Activated CD8-positive, alpha-beta T cell treated with anti-CD3 and anti-CD28 coated beads for 36 hours (primary cell): ENCODE measurements at regions of chr4 and their contacts with region 1.

Region 1: GRCh38 chr4:1266881-1267763 is 18.2 kb upstream of the CTBP1 start:
- DNase-seq: no peak
- ATAC-seq: peak; percentile 82
- H3K4me3 Mint-ChIP-seq: peak overlapping the region; percentile 64
- H3K27ac Mint-ChIP-seq: peak overlapping the region; percentile 93
- H3K4me1 Mint-ChIP-seq: peaks cover 20% of the 10 kb centered on the region
- H3K27me3 Mint-ChIP-seq: no peaks in the 10 kb centered on the region
- CTCF ChIP-seq: no peak

Region 2: GRCh38 chr4:880684-881405 is 386.3 kb before region 1 on chr4:
- CTCF ChIA-PET with region 1: no interaction called
- POLR2A ChIA-PET with region 1: no interaction called
- intact Hi-C with region 1: no loop called
- DNase-seq: no peak
- ATAC-seq: no peak
- H3K4me3 Mint-ChIP-seq: no peak overlapping the region
- H3K27ac Mint-ChIP-seq: peak overlapping the region; percentile 99
- H3K4me1 Mint-ChIP-seq: peaks cover 26% of the 10 kb centered on the region
- H3K27me3 Mint-ChIP-seq: no peaks in the 10 kb centered on the region
- CTCF ChIP-seq: no peak

Region 3: DNA sequence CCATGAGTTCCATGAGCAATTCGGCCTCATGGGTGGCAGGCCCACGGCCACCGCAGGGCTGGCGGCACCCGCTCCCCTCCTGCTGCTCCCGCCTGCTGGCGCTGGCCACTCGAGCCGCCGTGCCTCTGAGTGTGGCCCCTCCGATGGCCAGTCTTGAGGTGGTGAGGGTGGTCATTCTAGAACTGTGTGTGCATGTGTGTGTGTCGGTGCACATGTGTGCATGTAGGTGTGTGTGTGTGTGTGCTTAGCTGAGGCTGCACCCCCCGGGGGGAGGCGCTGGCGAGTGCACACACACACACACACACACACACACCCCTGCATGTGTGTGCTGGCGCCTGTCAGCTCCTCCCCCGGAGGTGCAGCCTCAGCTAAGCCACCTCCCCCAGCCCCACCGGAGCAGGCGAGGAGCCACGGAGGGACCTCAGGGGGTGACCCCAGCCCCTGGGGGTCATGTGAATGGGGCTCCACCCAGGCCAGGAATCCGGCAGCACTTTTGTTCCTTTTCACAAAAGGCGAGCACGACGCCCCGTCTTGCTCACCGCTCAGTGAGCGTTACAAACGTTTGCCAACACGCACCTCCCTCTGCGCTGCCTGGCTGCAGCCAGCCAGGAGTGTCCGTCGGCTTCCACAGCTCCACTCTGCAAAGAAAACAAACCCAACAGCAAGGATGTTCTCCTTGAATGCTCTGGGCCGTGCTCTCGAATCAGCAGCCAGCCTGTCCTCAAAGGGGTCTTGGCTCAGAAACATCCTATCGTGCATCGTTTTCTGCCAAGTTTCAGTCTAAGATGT is 225.8 kb before region 1 on chr4:
- CTCF ChIA-PET with region 1: no interaction called
- POLR2A ChIA-PET with region 1: no interaction called
- intact Hi-C with region 1: no loop called
- DNase-seq: no peak
- ATAC-seq: no peak
- H3K4me3 Mint-ChIP-seq: no peak overlapping the region
- H3K27ac Mint-ChIP-seq: no peak overlapping the region
- H3K4me1 Mint-ChIP-seq: peaks cover 5% of the 10 kb centered on the region
- H3K27me3 Mint-ChIP-seq: peaks cover 16% of the 10 kb centered on the region
- CTCF ChIP-seq: no peak

Region 4: DNA sequence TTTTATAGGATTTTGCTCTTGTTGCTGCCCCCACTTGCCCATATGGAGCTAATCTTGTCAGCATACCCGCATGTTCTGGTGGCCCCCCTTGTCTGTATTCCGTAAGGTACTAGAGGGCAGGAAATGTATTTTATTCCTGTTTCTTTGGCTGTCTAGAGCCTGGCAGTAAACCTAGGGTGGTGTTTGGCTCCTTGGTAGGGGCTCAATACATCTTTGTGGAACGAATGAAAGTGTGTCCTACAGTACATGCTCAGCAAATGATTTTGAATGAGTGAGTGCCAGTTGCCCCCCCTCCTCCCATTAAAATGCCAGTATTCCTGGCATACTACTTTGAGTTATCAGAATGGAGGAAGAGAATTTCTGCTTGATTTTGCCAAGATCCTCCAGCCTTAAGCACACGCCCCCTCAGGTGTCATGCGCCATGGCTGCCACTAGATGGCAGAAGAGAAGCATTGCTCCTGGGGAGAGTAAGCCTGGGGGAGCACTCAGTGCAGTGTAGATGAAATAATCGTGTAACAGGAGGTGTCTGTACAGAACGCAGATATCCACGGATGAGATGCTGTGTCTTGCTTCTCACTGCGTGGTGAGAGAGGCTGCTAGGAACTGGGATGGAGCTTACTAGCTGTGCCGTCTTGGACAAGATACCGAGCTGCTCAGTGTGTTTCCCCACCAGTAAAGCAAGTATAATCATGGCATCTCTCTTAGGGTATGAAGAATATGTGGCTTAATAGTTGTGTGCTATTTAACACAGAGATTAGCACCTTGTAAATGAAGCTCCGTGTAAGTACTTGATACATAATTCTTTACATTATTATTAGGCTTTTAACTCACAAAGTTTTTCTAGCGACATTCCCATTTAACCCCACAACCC is 136.6 kb before region 1 on chr4:
- CTCF ChIA-PET with region 1: interaction called, 44 read pairs
- POLR2A ChIA-PET with region 1: no interaction called
- intact Hi-C with region 1: no loop called
- DNase-seq: peak; percentile 72
- ATAC-seq: peak; percentile 100
- H3K4me3 Mint-ChIP-seq: no peak overlapping the region
- H3K27ac Mint-ChIP-seq: no peak overlapping the region
- H3K4me1 Mint-ChIP-seq: no peaks in the 10 kb centered on the region
- H3K27me3 Mint-ChIP-seq: peaks cover 3% of the 10 kb centered on the region
- CTCF ChIP-seq: peak; percentile 99

Region 5: GRCh38 chr4:1137063-1137776 is 129.9 kb before region 1 on chr4:
- CTCF ChIA-PET with region 1: interaction called, 44 read pairs
- POLR2A ChIA-PET with region 1: no interaction called
- intact Hi-C with region 1: no loop called
- DNase-seq: no peak
- ATAC-seq: peak; percentile 53
- H3K4me3 Mint-ChIP-seq: peak overlapping the region; percentile 62
- H3K27ac Mint-ChIP-seq: peak overlapping the region; percentile 65
- H3K4me1 Mint-ChIP-seq: peaks cover 9% of the 10 kb centered on the region
- H3K27me3 Mint-ChIP-seq: peaks cover 2% of the 10 kb centered on the region
- CTCF ChIP-seq: no peak

Region 6: GRCh38 chr4:1167247-1167949 is 99.7 kb before region 1 on chr4:
- CTCF ChIA-PET with region 1: interaction called, 39 read pairs
- POLR2A ChIA-PET with region 1: interaction called, 3 read pairs
- intact Hi-C with region 1: no loop called
- DNase-seq: peak; percentile 97
- ATAC-seq: peak; percentile 92
- H3K4me3 Mint-ChIP-seq: peak overlapping the region; percentile 76
- H3K27ac Mint-ChIP-seq: peak overlapping the region; percentile 83
- H3K4me1 Mint-ChIP-seq: peaks cover 33% of the 10 kb centered on the region
- H3K27me3 Mint-ChIP-seq: peaks cover 13% of the 10 kb centered on the region
- CTCF ChIP-seq: peak; percentile 96

Region 7: DNA sequence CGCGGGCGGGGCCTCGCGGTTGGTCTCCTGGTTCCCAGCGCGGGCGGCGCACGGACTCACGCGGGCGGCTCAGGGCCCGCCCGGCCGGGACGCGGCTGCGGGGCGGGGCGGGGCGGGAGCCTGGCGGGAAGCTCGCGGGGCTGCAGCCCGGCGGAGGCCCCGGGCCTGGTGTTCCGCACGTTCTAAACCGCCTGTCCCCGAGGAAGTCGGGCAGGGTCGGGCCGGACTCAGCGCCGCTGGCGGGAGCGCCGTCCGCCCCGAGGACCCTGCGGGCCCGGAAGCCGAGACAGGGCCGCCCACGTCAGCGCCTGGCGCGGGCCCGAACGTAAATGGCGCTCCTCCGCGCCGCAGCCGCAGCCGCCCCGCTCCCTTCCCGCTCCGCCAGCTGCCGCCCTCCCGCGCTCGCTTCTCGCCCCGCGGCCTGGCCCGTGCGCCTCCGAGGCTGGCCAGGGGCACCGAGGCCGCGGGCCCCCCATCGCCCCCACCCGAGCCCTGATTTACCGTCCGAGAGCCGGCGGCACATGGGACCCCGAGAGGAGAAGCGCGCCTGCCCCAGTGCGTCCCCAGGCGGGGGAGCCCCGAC is 17.9 kb before region 1 on chr4:
- CTCF ChIA-PET with region 1: interaction called, 31 read pairs
- POLR2A ChIA-PET with region 1: interaction called, 47 read pairs
- intact Hi-C with region 1: no loop called
- DNase-seq: peak; percentile 79
- ATAC-seq: peak; percentile 51
- H3K4me3 Mint-ChIP-seq: peak overlapping the region; percentile 86
- H3K27ac Mint-ChIP-seq: peak overlapping the region; percentile 91
- H3K4me1 Mint-ChIP-seq: peaks cover 69% of the 10 kb centered on the region
- H3K27me3 Mint-ChIP-seq: no peaks in the 10 kb centered on the region
- CTCF ChIP-seq: no peak

Region 8: DNA sequence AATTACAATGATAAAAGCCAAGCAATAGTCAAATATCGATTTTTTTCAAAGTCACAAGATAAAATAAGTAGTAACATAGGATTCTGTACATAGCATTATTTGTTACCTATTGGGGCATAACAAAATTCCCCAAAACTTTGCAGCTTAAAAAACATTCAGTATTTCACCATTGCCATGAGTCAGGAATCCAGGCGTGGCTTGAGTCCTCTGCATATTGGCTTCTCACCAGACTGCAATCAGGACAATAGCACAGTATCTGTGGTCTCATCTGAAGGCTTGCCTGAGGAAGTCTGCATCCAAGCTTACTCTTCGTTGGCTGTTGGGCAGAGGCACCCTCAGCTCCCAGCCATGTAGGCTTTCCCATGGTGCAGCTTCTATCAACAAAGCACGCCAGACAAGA is 12.0 kb before region 1 on chr4:
- CTCF ChIA-PET with region 1: interaction called, 43 read pairs
- POLR2A ChIA-PET with region 1: interaction called, 47 read pairs
- intact Hi-C with region 1: no loop called
- DNase-seq: no peak
- ATAC-seq: no peak
- H3K4me3 Mint-ChIP-seq: no peak overlapping the region
- H3K27ac Mint-ChIP-seq: no peak overlapping the region
- H3K4me1 Mint-ChIP-seq: peaks cover 75% of the 10 kb centered on the region
- H3K27me3 Mint-ChIP-seq: no peaks in the 10 kb centered on the region
- CTCF ChIP-seq: no peak

Region 9: GRCh38 chr4:1377226-1377605 is 110.1 kb after region 1 on chr4:
- CTCF ChIA-PET with region 1: no interaction called
- POLR2A ChIA-PET with region 1: no interaction called
- intact Hi-C with region 1: no loop called
- DNase-seq: no peak
- ATAC-seq: no peak
- H3K4me3 Mint-ChIP-seq: no peak overlapping the region
- H3K27ac Mint-ChIP-seq: no peak overlapping the region
- H3K4me1 Mint-ChIP-seq: no peaks in the 10 kb centered on the region
- H3K27me3 Mint-ChIP-seq: no peaks in the 10 kb centered on the region
- CTCF ChIP-seq: no peak

Region 10: DNA sequence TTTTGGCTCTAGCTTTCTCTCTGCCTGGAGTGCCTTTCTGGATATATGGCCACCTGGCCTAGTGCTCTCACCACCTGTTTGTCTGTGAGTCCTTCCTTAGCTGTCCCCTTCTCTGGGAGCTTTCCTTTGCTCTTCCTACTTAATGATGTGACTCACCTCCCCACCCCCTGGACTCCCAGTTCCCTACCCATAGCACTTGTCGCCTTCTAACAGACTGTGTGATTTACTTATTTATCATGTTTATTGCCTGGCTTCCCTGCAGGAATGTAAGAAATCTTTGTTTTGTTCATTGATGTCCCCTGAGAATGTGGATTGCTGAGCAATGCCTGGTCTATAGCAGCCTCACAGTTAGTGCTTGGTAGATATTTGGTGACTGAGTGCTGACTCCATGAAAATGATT is 1595.4 kb after region 1 on chr4:
- CTCF ChIA-PET with region 1: no interaction called
- POLR2A ChIA-PET with region 1: no interaction called
- intact Hi-C with region 1: no loop called
- DNase-seq: no peak
- ATAC-seq: no peak
- H3K4me3 Mint-ChIP-seq: no peak overlapping the region
- H3K27ac Mint-ChIP-seq: peak overlapping the region; percentile 2
- H3K4me1 Mint-ChIP-seq: peaks cover 81% of the 10 kb centered on the region
- H3K27me3 Mint-ChIP-seq: no peaks in the 10 kb centered on the region
- CTCF ChIP-seq: no peak